Aorta (tissue), 5 donors: ENCODE measurements at regions of chr15 and their contacts with region 1.

Region 1: GRCh38 chr15:84871428-84872305 is 12.8 kb upstream of the SLC28A1 start:
- DNase-seq: no peak
- ATAC-seq: no peak
- H3K4me3 ChIP-seq: no peak overlapping the region
- H3K27ac ChIP-seq: no peak overlapping the region
- H3K4me1 ChIP-seq: peaks cover 0 to 3% of the 10 kb centered on the region in 2 donors
- H3K27me3 ChIP-seq: no peaks in the 10 kb centered on the region

Region 2: DNA sequence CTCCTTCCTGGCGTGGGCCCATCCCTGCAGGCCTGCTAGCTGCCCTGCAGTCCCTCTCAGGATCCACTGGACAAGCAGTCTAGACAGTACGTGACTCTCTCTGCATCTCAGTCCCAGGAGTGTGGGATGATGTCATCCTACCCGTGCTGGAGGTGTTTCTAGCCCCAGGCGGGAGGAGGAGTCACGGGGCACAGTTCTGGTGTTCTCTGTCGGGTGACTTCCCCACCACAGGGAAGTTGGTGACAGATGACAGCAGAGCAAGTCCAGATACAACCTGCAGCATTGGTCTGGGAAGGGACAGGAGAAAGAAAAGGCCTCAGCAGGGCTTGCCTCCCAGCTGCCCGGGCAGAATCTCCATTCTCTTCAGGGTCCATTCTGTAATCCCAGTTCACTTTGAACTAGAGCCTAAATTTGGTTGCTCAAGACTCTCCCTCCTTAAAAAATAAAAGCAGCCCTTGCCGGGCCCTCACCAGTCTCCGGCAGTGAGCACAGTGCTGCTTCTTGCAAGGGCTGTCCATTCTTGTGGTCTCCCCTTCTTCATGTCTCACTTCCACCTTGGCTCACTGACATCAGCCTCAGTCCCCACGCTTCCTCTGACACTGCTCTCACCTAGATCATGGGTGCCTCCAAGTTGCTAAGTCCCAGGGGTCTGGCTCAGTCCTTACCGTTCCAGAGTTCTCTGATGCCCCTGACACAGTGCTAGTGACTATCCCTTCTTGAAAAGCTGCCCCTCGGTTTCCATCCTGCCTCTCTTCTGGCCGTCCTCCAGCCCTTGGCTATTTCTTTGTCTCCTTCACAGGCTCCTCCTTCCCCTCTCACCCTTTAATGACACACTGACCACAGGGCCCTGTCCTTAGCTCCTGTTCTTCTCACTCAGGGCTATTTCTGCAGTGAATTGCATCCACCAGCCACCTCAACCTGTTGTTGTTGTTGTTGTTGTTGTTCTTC is 43.6 kb after region 1 on chr15:
- intact Hi-C with region 1: loop called (anchors 5 kb)
- DNase-seq: peak; percentile 89 to 92
- ATAC-seq: peak; percentile 65
- H3K4me3 ChIP-seq: no peak overlapping the region
- H3K27ac ChIP-seq: peak overlapping the region; percentile 12 to 70
- H3K4me1 ChIP-seq: peaks cover 7 to 10% of the 10 kb centered on the region in 2 donors
- H3K27me3 ChIP-seq: no peaks in the 10 kb centered on the region

Region 3: DNA sequence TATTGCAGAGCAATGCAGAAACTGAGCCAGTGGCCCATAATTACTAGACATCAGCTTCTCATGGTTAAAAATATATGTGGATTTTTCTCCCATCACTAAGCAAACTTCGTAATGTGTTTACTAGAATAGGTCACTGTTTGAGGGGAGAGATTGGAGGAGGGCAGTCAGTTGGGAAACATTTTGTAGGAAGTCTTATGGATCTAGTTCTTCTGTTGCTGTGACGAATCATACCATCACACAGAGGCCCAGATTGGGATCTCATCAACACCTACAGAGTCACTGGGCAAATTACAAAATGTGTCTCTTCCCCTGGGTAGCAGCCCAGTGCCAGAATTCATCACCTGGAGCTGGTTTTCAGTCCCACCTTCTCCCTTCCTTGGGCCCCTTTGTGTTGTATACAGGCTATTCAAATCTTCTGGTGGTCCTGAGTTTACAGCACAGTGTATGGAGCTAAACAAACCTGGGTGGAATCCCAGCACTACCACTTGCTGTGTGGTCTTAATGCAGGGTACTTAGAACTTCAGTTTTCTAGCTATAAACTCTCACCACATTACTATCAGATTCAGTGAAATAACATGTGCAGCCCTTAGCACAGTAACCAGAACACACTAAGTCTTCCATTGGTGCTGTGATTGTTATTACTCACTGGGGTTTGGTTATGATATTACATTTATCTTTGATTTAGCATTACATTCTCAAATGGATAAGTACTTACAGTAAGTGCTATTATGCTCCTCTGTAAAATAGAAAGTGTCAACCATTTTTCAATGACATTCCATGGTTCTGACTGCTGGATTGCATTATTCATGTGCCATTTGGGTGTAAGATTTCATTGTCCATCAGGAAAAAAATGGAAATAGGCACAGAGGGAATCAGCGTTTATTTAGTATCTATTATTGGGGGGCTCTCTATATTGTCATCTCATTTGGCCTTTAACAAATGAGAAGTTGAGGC is 191.7 kb after region 1 on chr15:
- intact Hi-C with region 1: no loop called
- DNase-seq: no peak
- ATAC-seq: no peak
- H3K4me3 ChIP-seq: no peak overlapping the region
- H3K27ac ChIP-seq: no peak overlapping the region
- H3K4me1 ChIP-seq: no peaks in the 10 kb centered on the region
- H3K27me3 ChIP-seq: no peaks in the 10 kb centered on the region